ENCODE measurements at regions of chr4 and their contacts with region 1.

Region 1: GRCh38 chr4:39134683-39135319 is 47.5 kb upstream of the WDR19 start:
- DNase-seq: no peak
- ATAC-seq: no peak
- H3K4me3 Mint-ChIP-seq: no peak overlapping the region
- H3K27ac Mint-ChIP-seq: no peak overlapping the region
- H3K4me1 Mint-ChIP-seq: peaks cover 11% of the 10 kb centered on the region
- H3K27me3 Mint-ChIP-seq: no peaks in the 10 kb centered on the region

Region 2: DNA sequence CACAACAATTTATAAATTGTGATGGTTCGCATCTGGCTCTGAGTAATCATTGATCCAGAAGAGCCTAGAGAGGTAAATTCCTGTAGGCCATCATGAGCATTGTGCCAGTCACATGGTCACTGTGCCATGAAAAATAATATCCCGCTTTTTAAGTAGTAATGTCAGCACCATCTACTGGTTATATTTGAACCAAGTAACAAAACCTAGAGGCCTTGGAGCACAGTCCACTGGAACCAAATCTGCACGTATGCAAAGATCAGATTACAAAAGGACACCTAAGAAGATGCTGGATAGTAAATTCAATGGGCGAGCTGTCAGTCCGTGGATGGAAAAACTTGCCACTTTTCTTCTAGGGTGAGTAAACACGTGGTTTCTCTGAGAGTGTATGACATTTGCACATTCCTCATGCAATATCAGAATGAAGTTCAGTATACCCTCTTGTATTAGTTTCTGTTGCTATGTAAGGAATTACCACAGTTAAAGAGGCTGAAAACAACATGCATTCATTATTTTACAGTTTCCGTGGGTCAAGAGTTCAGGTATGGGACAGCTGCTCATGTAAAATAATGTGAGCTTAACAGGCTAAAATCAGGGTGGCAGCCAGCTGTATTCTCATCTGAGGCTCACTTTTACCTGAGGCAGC is 240.3 kb before region 1 on chr4:
- CTCF ChIA-PET with region 1: interaction called, 10 read pairs
- POLR2A ChIA-PET with region 1: no interaction called
- DNase-seq: no peak
- ATAC-seq: no peak
- H3K4me3 Mint-ChIP-seq: no peak overlapping the region
- H3K27ac Mint-ChIP-seq: no peak overlapping the region
- H3K4me1 Mint-ChIP-seq: peaks cover 6% of the 10 kb centered on the region
- H3K27me3 Mint-ChIP-seq: peaks cover 8% of the 10 kb centered on the region

Region 3: GRCh38 chr4:39044364-39044955 is 90.3 kb before region 1 on chr4:
- CTCF ChIA-PET with region 1: interaction called, 20 read pairs
- POLR2A ChIA-PET with region 1: no interaction called
- DNase-seq: peak; percentile 91
- ATAC-seq: peak; percentile 81
- H3K4me3 Mint-ChIP-seq: peak overlapping the region; percentile 75
- H3K27ac Mint-ChIP-seq: peak overlapping the region; percentile 79
- H3K4me1 Mint-ChIP-seq: peaks cover 46% of the 10 kb centered on the region
- H3K27me3 Mint-ChIP-seq: no peaks in the 10 kb centered on the region

Region 4: DNA sequence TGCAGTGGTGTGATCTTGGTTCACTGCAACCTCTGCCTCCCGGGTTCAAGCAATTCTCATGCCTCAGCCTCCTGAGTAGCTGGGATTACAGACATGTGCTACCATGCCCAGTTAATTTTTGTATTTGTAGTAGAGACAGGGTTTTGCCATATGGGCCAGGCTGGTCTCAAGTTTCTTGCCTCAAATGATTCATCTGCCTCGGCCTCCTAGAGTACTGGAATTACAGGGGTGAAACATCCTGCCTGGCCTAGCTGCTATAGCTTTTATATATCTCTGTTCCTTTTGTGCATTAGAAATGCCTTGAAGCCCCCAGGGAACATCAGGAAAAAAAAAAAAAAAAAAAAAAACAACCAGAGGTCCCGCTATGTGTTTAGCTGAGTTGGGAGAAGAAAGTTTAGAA is 597.9 kb after region 1 on chr4:
- CTCF ChIA-PET with region 1: no interaction called
- POLR2A ChIA-PET with region 1: no interaction called
- DNase-seq: no peak
- ATAC-seq: no peak
- H3K4me3 Mint-ChIP-seq: no peak overlapping the region
- H3K27ac Mint-ChIP-seq: no peak overlapping the region
- H3K4me1 Mint-ChIP-seq: peaks cover 6% of the 10 kb centered on the region
- H3K27me3 Mint-ChIP-seq: no peaks in the 10 kb centered on the region